Activated B cell treated with CpG ODN at 0.5 μM for 24 hours (primary cell): ENCODE measurements at regions of chr1 and their contacts with region 1.

Region 1: GRCh38 chr1:178581351-178582303 is 68.7 kb downstream of the TEX35 start:
- DNase-seq: peak; percentile 57
- ATAC-seq: peak; percentile 56
- H3K4me3 Mint-ChIP-seq: peak overlapping the region; percentile 66
- H3K27ac Mint-ChIP-seq: peak overlapping the region; percentile 98
- H3K4me1 Mint-ChIP-seq: peaks cover 93% of the 10 kb centered on the region
- H3K27me3 Mint-ChIP-seq: no peaks in the 10 kb centered on the region
- CTCF ChIP-seq: no peak

Region 2: DNA sequence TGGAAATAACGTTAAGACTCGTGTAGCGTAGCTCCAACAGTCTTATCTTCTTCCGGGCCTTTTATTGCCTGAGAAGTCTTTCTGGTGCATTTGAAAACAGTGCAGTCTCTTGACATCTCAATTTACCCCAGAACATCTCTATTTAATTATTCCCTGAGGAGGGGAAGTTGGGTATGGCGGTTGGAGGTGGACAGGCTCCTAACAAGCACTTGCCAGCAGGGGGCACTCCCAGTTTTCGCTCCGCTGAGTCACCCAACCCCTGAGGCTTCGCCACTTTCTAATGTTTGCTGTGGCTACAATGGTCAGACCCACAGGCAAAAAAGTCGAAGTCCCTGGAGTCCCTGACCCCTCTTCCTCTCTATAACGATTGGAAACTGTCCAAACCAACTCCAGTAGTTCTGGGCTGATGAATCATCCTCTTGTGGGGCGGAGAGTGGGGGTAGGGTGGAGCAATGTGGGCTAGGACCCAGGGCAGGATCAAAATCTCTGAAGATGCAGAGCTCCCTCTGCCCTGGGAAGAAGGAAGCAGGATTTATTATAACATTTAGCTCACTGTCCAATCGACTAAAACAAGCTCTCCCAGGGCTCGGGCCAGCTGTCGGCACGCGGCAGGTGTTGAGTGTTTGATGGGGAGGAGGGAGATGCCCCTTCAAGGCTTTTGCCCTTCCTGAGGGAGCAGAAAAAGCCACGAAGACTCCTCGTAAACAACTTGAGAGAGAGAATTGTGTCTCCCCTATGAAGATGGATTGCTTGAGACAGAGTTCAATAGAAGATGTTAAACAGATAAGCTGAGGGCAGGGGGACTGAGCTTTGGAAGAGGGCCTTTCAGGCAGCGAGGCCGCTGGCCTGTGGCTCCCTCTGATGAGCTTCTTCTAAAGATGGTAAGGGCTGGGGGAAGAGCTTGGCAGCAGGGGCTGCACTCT is 1325.2 kb before region 1 on chr1:
- CTCF ChIA-PET with region 1: no interaction called
- POLR2A ChIA-PET with region 1: no interaction called
- intact Hi-C with region 1: no loop called
- DNase-seq: no peak
- ATAC-seq: no peak
- H3K4me3 Mint-ChIP-seq: no peak overlapping the region
- H3K27ac Mint-ChIP-seq: no peak overlapping the region
- H3K4me1 Mint-ChIP-seq: no peaks in the 10 kb centered on the region
- H3K27me3 Mint-ChIP-seq: peaks cover 5% of the 10 kb centered on the region
- CTCF ChIP-seq: no peak

Region 3: GRCh38 chr1:178566187-178566586 is 15.4 kb before region 1 on chr1:
- CTCF ChIA-PET with region 1: interaction called, 3 read pairs
- POLR2A ChIA-PET with region 1: interaction called, 10 read pairs
- intact Hi-C with region 1: loop called (anchors 2 kb)
- DNase-seq: no peak
- ATAC-seq: peak; percentile 52
- H3K4me3 Mint-ChIP-seq: no peak overlapping the region
- H3K27ac Mint-ChIP-seq: peak overlapping the region; percentile 68
- H3K4me1 Mint-ChIP-seq: peaks cover 74% of the 10 kb centered on the region
- H3K27me3 Mint-ChIP-seq: no peaks in the 10 kb centered on the region
- CTCF ChIP-seq: no peak

Region 4: DNA sequence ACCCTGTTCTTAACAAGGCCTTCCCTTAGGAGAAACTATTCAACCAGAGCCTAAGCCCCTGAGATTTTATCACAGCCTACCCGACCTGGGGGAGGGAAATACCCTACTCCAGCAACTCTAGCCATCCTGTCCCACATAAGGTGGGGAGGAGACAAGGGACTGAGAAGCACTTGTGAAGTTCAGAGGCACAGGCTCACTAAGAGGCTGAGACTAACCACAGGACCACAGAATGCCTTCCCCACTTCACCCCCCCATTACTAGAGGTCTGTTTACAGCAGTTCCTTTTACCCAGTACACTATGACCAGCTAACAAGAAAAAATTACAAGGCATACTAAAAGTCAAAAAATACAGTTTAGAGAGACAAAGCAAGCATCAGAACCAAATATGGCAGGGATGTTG is 18.1 kb after region 1 on chr1:
- CTCF ChIA-PET with region 1: interaction called, 8 read pairs
- POLR2A ChIA-PET with region 1: interaction called, 394 read pairs
- intact Hi-C with region 1: loop called (anchors 2 kb)
- DNase-seq: no peak
- ATAC-seq: peak; percentile 69
- H3K4me3 Mint-ChIP-seq: peak overlapping the region; percentile 30
- H3K27ac Mint-ChIP-seq: peak overlapping the region; percentile 88
- H3K4me1 Mint-ChIP-seq: peaks cover 91% of the 10 kb centered on the region
- H3K27me3 Mint-ChIP-seq: no peaks in the 10 kb centered on the region
- CTCF ChIP-seq: no peak

Region 5: GRCh38 chr1:178619042-178619927 is 37.7 kb after region 1 on chr1:
- CTCF ChIA-PET with region 1: interaction called, 5 read pairs
- POLR2A ChIA-PET with region 1: interaction called, 31 read pairs
- intact Hi-C with region 1: no loop called
- DNase-seq: no peak
- ATAC-seq: peak; percentile 98
- H3K4me3 Mint-ChIP-seq: peak overlapping the region; percentile 67
- H3K27ac Mint-ChIP-seq: peak overlapping the region; percentile 91
- H3K4me1 Mint-ChIP-seq: peaks cover 58% of the 10 kb centered on the region
- H3K27me3 Mint-ChIP-seq: no peaks in the 10 kb centered on the region
- CTCF ChIP-seq: no peak

Region 6: DNA sequence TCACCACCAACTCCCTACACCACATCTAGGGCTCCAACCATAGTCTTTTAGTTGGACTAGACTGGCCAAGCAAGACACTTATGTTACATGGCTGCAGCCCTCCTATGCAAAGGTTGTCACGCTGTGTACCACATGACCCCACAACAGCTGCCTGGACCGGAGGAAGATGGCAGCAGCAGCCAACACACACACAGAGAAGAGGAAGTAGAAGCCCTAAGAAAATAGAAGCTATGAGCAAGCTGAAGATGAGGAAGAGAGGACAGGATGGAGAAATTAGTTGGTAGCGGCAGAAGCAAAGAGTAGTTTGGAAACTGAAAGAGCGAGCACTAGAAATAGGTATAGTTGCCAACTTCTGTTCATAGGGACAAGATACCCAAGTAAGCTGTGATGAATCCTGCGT is 82.7 kb after region 1 on chr1:
- CTCF ChIA-PET with region 1: interaction called, 5 read pairs
- POLR2A ChIA-PET with region 1: interaction called, 13 read pairs
- intact Hi-C with region 1: loop called (anchors 1 kb)
- DNase-seq: peak; percentile 28
- ATAC-seq: peak; percentile 83
- H3K4me3 Mint-ChIP-seq: peak overlapping the region; percentile 69
- H3K27ac Mint-ChIP-seq: peak overlapping the region; percentile 86
- H3K4me1 Mint-ChIP-seq: peaks cover 91% of the 10 kb centered on the region
- H3K27me3 Mint-ChIP-seq: no peaks in the 10 kb centered on the region
- CTCF ChIP-seq: no peak

Region 7: GRCh38 chr1:178908358-178908757 is 326.7 kb after region 1 on chr1:
- CTCF ChIA-PET with region 1: no interaction called
- POLR2A ChIA-PET with region 1: no interaction called
- intact Hi-C with region 1: no loop called
- DNase-seq: no peak
- ATAC-seq: no peak
- H3K4me3 Mint-ChIP-seq: no peak overlapping the region
- H3K27ac Mint-ChIP-seq: peak overlapping the region; percentile 46
- H3K4me1 Mint-ChIP-seq: peaks cover 42% of the 10 kb centered on the region
- H3K27me3 Mint-ChIP-seq: no peaks in the 10 kb centered on the region
- CTCF ChIP-seq: no peak

Region 8: GRCh38 chr1:179025125-179025974 is 443.7 kb after region 1 on chr1 and contains the start of gene FAM20B:
- CTCF ChIA-PET with region 1: no interaction called
- POLR2A ChIA-PET with region 1: no interaction called
- intact Hi-C with region 1: loop called (anchors 1 kb)
- DNase-seq: peak; percentile 90
- ATAC-seq: peak; percentile 84
- H3K4me3 Mint-ChIP-seq: peak within 1 kb of the TSS; percentile 90
- H3K27ac Mint-ChIP-seq: peak within 1 kb of the TSS; percentile 90
- H3K4me1 Mint-ChIP-seq: peaks cover 43% of the 10 kb centered on the region
- H3K27me3 Mint-ChIP-seq: no peaks in the 10 kb centered on the region
- CTCF ChIP-seq: no peak
- total RNA-seq, gene FAM20B: 26.3 and 27.5 TPM in 2 replicates